Transverse colon (tissue), 4 donors: ENCODE measurements at regions of chr6 and their contacts with region 1.

Region 1: DNA sequence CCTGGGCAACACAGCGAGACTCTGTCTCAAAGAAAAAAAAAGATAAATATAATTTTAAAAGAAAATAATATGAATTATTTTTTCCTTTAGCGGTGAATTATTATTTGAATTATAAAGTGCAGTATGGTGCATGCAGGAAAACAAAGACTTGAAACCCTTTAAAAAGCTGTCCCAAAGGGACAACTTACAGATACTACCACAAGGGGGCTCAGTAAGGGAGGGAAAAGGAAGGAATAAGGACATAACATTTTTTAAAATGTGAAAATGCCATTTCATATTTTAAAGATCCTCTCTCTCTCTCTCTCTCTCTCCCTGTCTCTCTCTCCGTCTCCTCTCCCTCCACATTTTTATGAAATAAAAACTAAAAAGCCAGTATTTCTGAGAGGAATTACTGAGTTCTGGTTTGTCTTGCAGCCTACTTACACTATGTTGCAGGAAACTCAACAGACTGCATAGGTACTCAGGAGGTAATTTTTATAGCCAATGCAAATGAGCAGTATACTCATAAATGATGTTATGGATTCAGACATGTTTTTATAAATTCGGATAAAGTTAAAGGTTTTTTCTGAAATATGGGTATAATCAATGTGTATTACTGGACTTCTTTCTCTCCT is 455.0 kb upstream of the GJE1 start:
- DNase-seq: no peak
- H3K4me3 ChIP-seq: no peak overlapping the region
- H3K27ac ChIP-seq: no peak overlapping the region
- H3K4me1 ChIP-seq: no peaks in the 10 kb centered on the region
- H3K27me3 ChIP-seq: no peaks in the 10 kb centered on the region
- CTCF ChIP-seq: peak; percentile 10 to 33 (median 23)
- EP300 ChIP-seq: no peak
- POLR2A ChIP-seq: no peak

Region 2: DNA sequence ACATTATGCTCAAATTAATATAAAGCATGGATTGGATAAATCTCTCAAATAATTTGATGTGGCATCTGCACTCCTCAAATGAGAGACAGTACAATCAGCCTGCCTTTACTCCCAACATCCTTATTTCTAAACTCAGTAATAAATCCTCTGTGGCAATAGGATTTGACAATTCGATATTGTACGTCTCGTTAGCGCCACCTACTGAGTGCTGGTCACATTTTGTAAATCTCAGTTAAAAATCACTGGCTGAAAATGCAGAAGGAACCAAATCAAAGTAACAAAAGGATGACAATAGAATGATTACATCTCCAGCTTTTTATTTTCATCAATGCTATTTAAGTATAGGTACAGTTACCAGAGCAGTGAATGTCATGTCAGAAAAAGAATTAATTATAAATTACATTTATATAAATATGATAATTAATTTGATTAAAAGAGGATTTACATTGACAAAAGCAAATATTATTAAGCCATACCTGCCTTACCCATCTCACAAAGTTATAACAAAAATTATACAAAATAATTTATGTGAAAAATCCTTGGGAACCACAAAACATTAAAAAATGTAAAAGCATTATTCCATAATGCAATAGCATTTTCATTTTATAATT is 434.9 kb after region 1 on chr6:
- in situ Hi-C with region 1: loop called in 2 of 4 experiments (anchors 25 kb)
- intact Hi-C with region 1: no loop called
- DNase-seq: peak; percentile 61
- H3K4me3 ChIP-seq: no peak overlapping the region
- H3K27ac ChIP-seq: no peak overlapping the region
- H3K4me1 ChIP-seq: no peaks in the 10 kb centered on the region
- H3K27me3 ChIP-seq: no peaks in the 10 kb centered on the region
- CTCF ChIP-seq: peak; percentile 39 to 59 (median 57)
- EP300 ChIP-seq: no peak
- POLR2A ChIP-seq: no peak